Activated CD8-positive, alpha-beta T cell treated with anti-CD3 and anti-CD28 coated beads for 36 hours (primary cell): ENCODE measurements at regions of chr20 and their contacts with region 1.

Region 1: GRCh38 chr20:46132705-46133120 is 14.6 kb downstream of the CD40 start:
- DNase-seq: peak; percentile 77
- ATAC-seq: peak; percentile 91
- H3K4me3 Mint-ChIP-seq: no peak overlapping the region
- H3K27ac Mint-ChIP-seq: no peak overlapping the region
- H3K4me1 Mint-ChIP-seq: no peaks in the 10 kb centered on the region
- H3K27me3 Mint-ChIP-seq: peaks cover 38% of the 10 kb centered on the region
- CTCF ChIP-seq: peak; percentile 86

Region 2: DNA sequence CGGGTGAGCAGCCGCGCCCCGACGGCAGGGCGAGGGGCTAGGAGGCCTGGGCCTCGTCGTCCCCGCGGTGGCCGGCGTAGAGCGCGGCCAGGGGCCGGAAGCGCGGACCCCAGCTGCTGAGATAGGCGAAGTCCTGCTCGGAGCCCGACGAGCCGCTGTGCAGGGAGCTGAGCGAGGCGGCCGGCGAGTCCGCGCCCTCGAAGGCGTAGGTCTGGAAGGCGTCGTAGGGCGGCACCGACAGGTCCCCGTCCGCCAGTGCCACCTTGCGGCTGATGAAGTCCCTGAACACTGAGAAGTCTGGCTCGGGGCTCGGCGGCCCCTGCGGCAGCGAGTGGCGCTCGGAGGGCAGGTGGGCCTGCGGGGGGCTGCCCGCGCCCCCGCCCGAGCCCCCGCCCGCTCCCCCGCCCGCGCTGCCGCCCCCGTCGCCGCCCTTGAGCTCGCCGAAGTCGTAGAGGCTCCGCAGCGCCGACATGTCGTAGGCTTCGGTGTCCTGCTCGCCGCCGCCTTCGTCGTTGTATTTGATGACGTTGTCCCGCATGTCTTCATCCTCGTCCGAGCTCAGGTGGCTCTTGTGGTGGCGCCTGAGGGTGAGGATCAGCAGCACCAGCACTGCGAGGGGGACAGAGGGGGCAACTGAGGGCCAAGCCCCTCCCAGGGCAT is 41.9 kb after region 1 on chr20:
- CTCF ChIA-PET with region 1: interaction called, 39 read pairs
- POLR2A ChIA-PET with region 1: no interaction called
- intact Hi-C with region 1: no loop called
- DNase-seq: peak; percentile 84
- ATAC-seq: peak; percentile 98
- H3K4me3 Mint-ChIP-seq: no peak overlapping the region
- H3K27ac Mint-ChIP-seq: no peak overlapping the region
- H3K4me1 Mint-ChIP-seq: no peaks in the 10 kb centered on the region
- H3K27me3 Mint-ChIP-seq: peaks cover 41% of the 10 kb centered on the region
- CTCF ChIP-seq: peak; percentile 69

Region 3: DNA sequence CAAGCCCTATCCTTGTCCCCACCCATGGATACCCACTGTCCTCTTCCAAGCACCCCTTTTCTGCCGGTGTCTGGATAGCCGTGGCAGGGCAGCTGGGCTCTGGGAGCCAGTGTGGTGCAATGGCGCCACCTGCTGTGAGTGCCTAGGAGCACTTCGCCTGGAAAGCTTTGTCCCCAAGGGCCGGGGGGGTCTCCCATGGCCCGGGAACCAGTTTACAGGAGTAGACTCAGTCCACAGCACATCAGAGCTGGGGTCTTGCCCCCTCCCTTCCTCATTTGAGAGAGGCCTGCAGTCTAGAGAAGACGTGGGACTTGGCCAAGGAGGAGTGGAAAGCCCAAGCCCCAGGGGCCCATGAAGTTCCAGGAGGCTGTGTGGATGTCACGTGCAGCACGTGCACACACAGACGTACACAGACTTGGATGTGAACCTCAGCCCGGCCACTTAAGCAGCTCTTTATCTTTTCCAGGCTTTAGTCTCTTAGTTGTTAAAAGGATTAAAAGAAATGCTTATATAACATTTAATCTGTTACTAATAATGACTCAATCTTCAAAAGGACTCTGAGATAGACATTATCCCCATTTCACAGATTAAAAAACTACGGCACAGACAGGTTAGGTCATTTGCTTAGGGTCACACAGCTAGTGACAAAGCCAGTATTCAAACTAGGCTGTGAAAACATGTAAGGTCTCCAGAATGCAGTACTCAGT is 216.5 kb after region 1 on chr20:
- CTCF ChIA-PET with region 1: interaction called, 14 read pairs
- POLR2A ChIA-PET with region 1: no interaction called
- intact Hi-C with region 1: no loop called
- DNase-seq: peak; percentile 64
- ATAC-seq: peak; percentile 68
- H3K4me3 Mint-ChIP-seq: no peak overlapping the region
- H3K27ac Mint-ChIP-seq: no peak overlapping the region
- H3K4me1 Mint-ChIP-seq: peaks cover 17% of the 10 kb centered on the region
- H3K27me3 Mint-ChIP-seq: no peaks in the 10 kb centered on the region
- CTCF ChIP-seq: peak; percentile 78